Common myeloid progenitor, CD34-positive (primary cell): ENCODE measurements at regions of chr12 and their contacts with region 1.

Region 1: GRCh38 chr12:121499929-121500793 is 80.7 kb downstream of the KDM2B start:
- DNase-seq: peak; percentile 46 to 66 (median 58)
- H3K4me3 ChIP-seq: no peak overlapping the region
- H3K27ac ChIP-seq: no peak overlapping the region
- H3K4me1 ChIP-seq: peaks cover 3 to 8% (median 7%) of the 10 kb centered on the region in 4 experiments
- H3K27me3 ChIP-seq: no peaks in the 10 kb centered on the region

Region 2: GRCh38 chr12:120437754-120438494 is 1062.2 kb before region 1 on chr12 and contains the start of gene COX6A1:
- CTCF ChIA-PET with region 1: no interaction called
- POLR2A ChIA-PET with region 1: no interaction called
- DNase-seq: peak; percentile 99
- H3K4me3 ChIP-seq: peak within 1 kb of the TSS; percentile 77 to 93 (median 86)
- H3K27ac ChIP-seq: peak within 1 kb of the TSS; percentile 58 to 83
- H3K4me1 ChIP-seq: peaks cover 8 to 23% (median 16%) of the 10 kb centered on the region in 4 experiments
- H3K27me3 ChIP-seq: no peaks in the 10 kb centered on the region

Region 3: GRCh38 chr12:120944645-120945231 is 555.4 kb before region 1 on chr12:
- CTCF ChIA-PET with region 1: no interaction called
- POLR2A ChIA-PET with region 1: no interaction called
- DNase-seq: peak; percentile 51 to 68 (median 60)
- H3K4me3 ChIP-seq: no peak overlapping the region
- H3K27ac ChIP-seq: no peak overlapping the region
- H3K4me1 ChIP-seq: peaks cover 0 to 12% (median 1%) of the 10 kb centered on the region in 4 experiments
- H3K27me3 ChIP-seq: no peaks in the 10 kb centered on the region

Region 4: GRCh38 chr12:121391619-121392324 is 108.4 kb before region 1 on chr12:
- CTCF ChIA-PET with region 1: no interaction called
- POLR2A ChIA-PET with region 1: no interaction called
- DNase-seq: peak; percentile 40 to 80 (median 77)
- H3K4me3 ChIP-seq: peak overlapping the region in 3 of 7 experiments; percentile 20 to 54 (median 27)
- H3K27ac ChIP-seq: peak overlapping the region in 1 of 2 experiments; percentile 27
- H3K4me1 ChIP-seq: peaks cover 0 to 13% (median 8%) of the 10 kb centered on the region in 4 experiments
- H3K27me3 ChIP-seq: no peaks in the 10 kb centered on the region

Region 5: GRCh38 chr12:121443193-121443870 is 56.8 kb before region 1 on chr12:
- CTCF ChIA-PET with region 1: no interaction called
- POLR2A ChIA-PET with region 1: no interaction called
- DNase-seq: peak; percentile 35 to 57 (median 46)
- H3K4me3 ChIP-seq: no peak overlapping the region
- H3K27ac ChIP-seq: no peak overlapping the region
- H3K4me1 ChIP-seq: no peaks in the 10 kb centered on the region
- H3K27me3 ChIP-seq: no peaks in the 10 kb centered on the region

Region 6: DNA sequence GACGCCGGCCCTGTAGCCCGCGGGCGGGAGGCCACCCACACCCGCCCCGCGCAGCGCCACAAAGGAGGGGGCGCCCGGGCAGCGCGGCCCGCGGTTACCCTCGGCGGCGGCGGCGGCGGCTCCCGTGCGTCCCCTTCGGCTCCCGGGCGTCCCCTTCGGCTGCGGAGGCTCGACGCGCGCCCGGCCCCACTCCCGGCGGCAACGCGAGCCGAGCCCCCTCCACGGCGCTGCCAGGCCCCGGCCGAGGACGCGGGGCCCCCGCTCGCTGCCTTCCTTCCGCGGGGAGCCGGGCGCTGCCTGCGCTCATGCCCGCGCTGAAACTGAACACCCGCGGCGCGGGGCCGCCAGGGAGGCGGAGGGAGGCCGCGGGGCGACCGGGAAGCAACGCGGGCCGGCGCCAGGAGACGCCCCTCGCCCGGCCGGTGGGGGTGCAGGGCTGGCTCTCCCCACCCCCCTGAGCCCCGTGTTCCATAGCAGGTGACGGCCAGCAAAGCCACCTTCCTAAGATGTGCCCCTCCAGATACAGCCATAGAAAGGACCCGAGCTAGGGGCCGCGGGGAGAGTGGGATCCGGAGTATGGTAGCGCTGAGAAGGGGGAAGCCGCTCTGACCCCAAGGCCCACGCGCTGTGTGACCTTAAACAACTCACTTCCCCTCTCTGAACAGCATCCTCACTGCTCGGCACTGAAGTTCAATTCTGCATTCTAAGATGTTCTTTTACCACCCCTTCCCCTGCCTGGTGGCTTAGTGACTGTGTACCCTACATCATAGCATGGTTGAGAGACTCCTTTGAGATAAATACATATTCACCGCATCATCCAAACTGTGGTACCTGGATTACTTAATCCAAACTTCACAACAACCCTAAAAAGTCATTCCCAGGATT is 37.9 kb after region 1 on chr12:
- CTCF ChIA-PET with region 1: interaction called, 12 read pairs
- POLR2A ChIA-PET with region 1: no interaction called
- DNase-seq: peak in 2 of 3 donors; percentile 18 to 54
- H3K4me3 ChIP-seq: peak overlapping the region; percentile 30 to 79 (median 67)
- H3K27ac ChIP-seq: peak overlapping the region in 1 of 2 experiments; percentile 25
- H3K4me1 ChIP-seq: peaks cover 0 to 39% (median 30%) of the 10 kb centered on the region in 4 experiments
- H3K27me3 ChIP-seq: no peaks in the 10 kb centered on the region